ENCODE measurements at regions of chr4 and their contacts with region 1.

Region 1: DNA sequence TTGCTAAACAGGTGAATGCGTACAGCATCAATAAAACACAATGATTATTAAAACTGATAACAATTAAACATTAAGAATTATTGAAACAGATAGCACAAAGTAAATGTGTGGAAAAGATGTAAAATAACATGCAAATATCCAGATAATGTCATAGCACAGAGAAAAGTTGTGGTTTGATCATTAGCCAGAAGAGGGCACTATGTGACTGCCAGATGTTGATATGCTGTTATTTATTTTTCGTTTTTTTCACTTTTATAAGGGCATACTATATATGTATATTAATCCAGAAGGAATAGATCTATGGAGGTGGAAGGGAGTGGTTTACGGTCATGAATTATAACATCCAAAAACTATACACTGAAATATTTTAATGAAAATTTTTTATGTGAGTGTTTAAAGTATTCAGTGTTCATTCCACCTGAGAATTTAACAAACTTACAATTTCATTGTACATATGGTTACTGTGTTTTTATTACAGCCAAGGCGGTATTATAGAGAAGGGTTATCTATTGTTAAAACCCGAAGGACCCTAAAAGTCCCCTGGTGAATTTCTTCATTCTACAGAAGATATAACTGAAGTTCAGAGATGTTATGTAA is 211.9 kb upstream of the UGT8 start:
- DNase-seq: peak in 4 of 5 donors; percentile 4 to 16 (median 6)
- H3K4me3 ChIP-seq: no peak overlapping the region
- H3K4me3 Mint-ChIP-seq: no peak overlapping the region
- H3K27ac ChIP-seq: no peak overlapping the region
- H3K27ac Mint-ChIP-seq: no peak overlapping the region
- H3K4me1 ChIP-seq: no peaks in the 10 kb centered on the region
- H3K4me1 Mint-ChIP-seq: no peaks in the 10 kb centered on the region
- H3K27me3 ChIP-seq: no peaks in the 10 kb centered on the region
- H3K27me3 Mint-ChIP-seq: peaks cover 3 to 4% of the 10 kb centered on the region in 2 donors

Region 2: DNA sequence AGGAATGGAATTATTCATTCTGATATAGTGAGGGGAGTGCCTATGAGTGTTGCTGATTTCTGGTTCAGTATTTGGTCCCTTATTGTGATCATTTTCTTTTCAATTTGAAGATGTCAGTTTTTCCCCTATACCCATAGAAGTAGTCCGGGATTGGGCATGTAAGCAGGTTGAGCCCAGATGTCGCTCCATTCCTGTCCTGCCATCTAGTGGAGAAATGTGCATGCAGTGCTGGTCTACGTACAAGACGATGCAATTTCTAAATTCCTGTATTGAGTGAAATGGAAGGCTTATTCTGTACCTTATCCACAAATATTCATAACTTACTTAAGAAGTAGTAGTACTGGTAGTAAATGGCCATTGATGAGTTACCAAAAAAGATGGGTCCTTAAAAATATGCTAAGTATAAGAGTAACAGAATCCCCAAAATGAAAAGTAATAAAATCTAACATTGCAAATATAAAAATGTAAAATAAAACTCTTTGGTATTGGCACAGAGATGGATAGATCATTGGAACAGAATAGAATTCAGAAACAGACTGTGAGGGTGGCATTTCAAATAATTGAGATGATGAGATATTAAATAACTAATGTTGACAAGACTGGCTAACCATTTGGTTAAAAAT is 272.8 kb after region 1 on chr4:
- CTCF ChIA-PET with region 1: no interaction called
- POLR2A ChIA-PET with region 1: no interaction called
- intact Hi-C with region 1: loop called (anchors 1 kb)
- DNase-seq: peak; percentile 17 to 25 (median 22)
- H3K4me3 ChIP-seq: no peak overlapping the region
- H3K4me3 Mint-ChIP-seq: no peak overlapping the region
- H3K27ac ChIP-seq: no peak overlapping the region
- H3K27ac Mint-ChIP-seq: no peak overlapping the region
- H3K4me1 ChIP-seq: no peaks in the 10 kb centered on the region
- H3K4me1 Mint-ChIP-seq: no peaks in the 10 kb centered on the region
- H3K27me3 ChIP-seq: no peaks in the 10 kb centered on the region
- H3K27me3 Mint-ChIP-seq: peaks cover 0 to 7% of the 10 kb centered on the region in 2 donors

Region 3: GRCh38 chr4:114807759-114808404 is 421.1 kb after region 1 on chr4:
- CTCF ChIA-PET with region 1: interaction called, 3 read pairs
- POLR2A ChIA-PET with region 1: no interaction called
- intact Hi-C with region 1: loop called (anchors 5 kb)
- DNase-seq: peak in 4 of 5 donors; percentile 24 to 43 (median 36)
- H3K4me3 ChIP-seq: no peak overlapping the region
- H3K4me3 Mint-ChIP-seq: no peak overlapping the region
- H3K27ac ChIP-seq: no peak overlapping the region
- H3K27ac Mint-ChIP-seq: no peak overlapping the region
- H3K4me1 ChIP-seq: no peaks in the 10 kb centered on the region
- H3K4me1 Mint-ChIP-seq: no peaks in the 10 kb centered on the region
- H3K27me3 ChIP-seq: no peaks in the 10 kb centered on the region
- H3K27me3 Mint-ChIP-seq: peaks cover 1 to 9% of the 10 kb centered on the region in 2 donors